ENCODE measurements at regions of chr10 and their contacts with region 1.

Region 1: DNA sequence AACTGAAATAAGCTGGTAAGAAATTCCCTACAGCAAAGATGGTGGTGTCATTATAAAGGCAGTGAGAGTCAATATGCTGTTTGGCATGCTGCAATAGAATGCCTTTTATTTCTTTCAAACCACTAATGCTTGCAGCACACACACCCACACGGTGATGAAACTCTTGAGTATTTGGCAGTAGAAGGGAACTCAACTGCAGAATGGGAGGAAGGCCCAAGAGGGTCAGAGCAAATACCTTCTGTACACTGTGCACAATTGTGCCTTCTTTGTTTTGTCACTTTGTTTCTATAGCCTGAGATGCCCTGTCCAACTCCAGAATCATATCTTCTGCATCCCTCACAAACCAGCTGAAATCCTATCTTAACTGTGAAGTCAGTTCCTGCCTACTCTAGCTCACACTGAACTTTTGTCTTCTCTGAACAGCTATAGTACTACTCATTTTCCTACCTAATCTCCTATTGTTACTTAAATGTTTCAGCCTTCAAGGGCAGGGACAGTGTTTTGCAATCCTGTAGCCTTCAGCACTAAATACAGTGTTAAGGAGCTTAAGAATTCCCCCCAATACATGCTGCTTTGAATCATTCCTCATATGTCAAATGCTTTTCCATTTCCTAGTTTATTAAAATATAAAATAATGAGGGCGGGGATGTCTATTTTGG is 22.2 kb downstream of the MMS19 start:
- DNase-seq: no peak
- ATAC-seq: no peak
- H3K4me3 ChIP-seq: no peak overlapping the region
- H3K27ac ChIP-seq: no peak overlapping the region
- H3K4me1 ChIP-seq: no peaks in the 10 kb centered on the region
- H3K27me3 ChIP-seq: no peaks in the 10 kb centered on the region
- CTCF ChIP-seq: no peak
- EP300 ChIP-seq: no peak
- POLR2A ChIP-seq: no peak
- RAD21 ChIP-seq: no peak

Region 2: DNA sequence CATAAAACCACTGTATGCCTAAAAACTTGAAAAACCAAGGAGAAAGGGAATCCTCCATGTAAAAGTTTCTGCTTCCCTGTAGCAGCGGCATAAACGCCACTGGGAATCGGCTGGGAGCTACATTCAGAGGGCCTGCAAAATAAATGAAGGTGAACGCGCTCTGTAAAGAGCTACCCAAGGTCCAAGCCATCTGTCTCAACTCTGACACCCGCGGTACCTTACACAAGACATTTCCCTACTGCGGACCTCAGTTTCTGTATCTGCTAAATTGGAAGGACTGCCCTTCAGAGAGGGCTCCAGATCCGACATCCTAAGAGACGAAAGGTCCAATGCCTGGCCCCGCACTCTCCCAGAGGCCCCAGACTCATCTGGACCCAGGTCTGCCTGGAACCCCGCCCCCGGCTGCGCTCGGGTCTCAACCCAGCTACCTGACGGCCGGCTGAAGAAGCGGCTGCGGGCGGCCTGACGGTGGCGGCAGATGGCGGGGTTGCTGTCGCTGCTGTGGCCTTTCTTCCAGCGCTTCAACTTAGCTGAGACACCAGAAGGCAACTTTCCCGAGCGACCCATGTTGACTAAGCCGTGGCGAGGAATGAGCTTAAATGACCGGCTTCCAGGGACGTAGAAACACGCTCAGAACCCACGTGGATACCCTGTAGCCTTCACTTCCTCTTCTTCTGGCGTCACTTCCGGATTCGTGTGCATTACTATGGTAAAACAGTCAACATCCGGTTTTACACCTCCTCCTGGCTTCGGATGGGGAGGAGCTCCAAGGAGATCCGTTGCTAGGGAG is 75.2 kb before region 1 on chr10 and contains the start of gene RRP12:
- CTCF ChIA-PET with region 1: no interaction called
- POLR2A ChIA-PET with region 1: no interaction called
- RAD21 ChIA-PET with region 1: no interaction called
- SMC1A ChIA-PET with region 1: no interaction called
- in situ Hi-C with region 1: no loop called
- intact Hi-C with region 1: no loop called
- DNase-seq: peak; percentile 93
- ATAC-seq: peak; percentile 96
- H3K4me3 ChIP-seq: peak within 1 kb of the TSS; percentile 72
- H3K27ac ChIP-seq: peak within 1 kb of the TSS; percentile 34; the same call in 1 of the 2 replicates
- H3K4me1 ChIP-seq: no peaks in the 10 kb centered on the region
- H3K27me3 ChIP-seq: no peaks in the 10 kb centered on the region
- CTCF ChIP-seq: 0 out of 6 replicates have a peak, but pooled peaks of 1 of the 3 experiments have one; percentile 16
- EP300 ChIP-seq: no peak
- POLR2A ChIP-seq: peak; percentile 77
- RAD21 ChIP-seq: no peak
- polyA plus RNA-seq, gene RRP12: 5.3 to 5.7 TPM

Region 3: DNA sequence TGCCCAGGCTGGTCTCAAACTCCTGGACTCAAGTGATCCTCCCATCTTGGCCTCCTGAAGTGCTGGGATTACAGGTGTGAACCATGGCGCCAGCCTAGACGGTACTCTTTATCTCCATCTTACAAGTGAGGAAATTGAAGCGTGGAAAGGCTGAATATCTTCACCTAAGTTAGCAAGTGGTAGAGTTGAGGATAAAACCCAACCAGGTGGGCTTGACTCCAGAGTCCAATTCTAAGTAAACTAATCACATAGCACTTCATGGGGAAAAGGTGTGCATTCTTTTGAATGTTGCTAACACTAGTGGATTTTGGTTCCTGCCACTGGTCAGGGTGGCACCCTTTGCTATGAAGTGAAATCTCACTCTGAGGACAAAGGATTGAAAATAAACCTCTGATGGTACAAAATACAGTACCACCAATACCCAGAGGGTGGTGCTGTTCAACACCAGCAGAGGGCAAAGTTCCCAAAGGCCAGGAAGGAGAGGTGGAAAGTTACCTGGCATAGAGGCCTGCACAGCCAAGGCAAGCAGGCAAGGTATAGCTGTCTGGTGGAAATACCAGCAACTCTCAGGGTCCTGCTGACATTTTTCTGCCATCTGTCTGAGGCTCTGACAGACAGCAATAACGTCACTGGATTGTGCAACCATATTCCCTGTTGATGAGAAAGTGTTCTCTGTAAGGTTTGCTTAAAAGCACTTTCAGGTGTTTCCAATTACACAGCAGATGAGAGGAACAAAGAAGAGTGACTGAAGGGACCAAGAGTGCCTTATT is 12.5 kb before region 1 on chr10:
- CTCF ChIA-PET with region 1: interaction called, 12 read pairs
- POLR2A ChIA-PET with region 1: interaction called, 3 read pairs
- RAD21 ChIA-PET with region 1: no interaction called
- SMC1A ChIA-PET with region 1: interaction called, 3 read pairs
- in situ Hi-C with region 1: no loop called
- intact Hi-C with region 1: no loop called
- DNase-seq: peak; percentile 9
- ATAC-seq: peak; percentile 87
- H3K4me3 ChIP-seq: no peak overlapping the region
- H3K27ac ChIP-seq: no peak overlapping the region
- H3K4me1 ChIP-seq: no peaks in the 10 kb centered on the region
- H3K27me3 ChIP-seq: no peaks in the 10 kb centered on the region
- CTCF ChIP-seq: peak; percentile 77 to 85 (median 84)
- EP300 ChIP-seq: no peak
- POLR2A ChIP-seq: no peak
- RAD21 ChIP-seq: peak; percentile 71

Region 4: GRCh38 chr10:97726636-97727178 is 250.6 kb after region 1 on chr10:
- CTCF ChIA-PET with region 1: no interaction called
- POLR2A ChIA-PET with region 1: no interaction called
- RAD21 ChIA-PET with region 1: no interaction called
- SMC1A ChIA-PET with region 1: no interaction called
- in situ Hi-C with region 1: no loop called
- intact Hi-C with region 1: no loop called
- DNase-seq: no peak
- ATAC-seq: no peak
- H3K4me3 ChIP-seq: no peak overlapping the region
- H3K27ac ChIP-seq: no peak overlapping the region
- H3K4me1 ChIP-seq: no peaks in the 10 kb centered on the region
- H3K27me3 ChIP-seq: no peaks in the 10 kb centered on the region
- CTCF ChIP-seq: no peak
- EP300 ChIP-seq: no peak
- POLR2A ChIP-seq: no peak
- RAD21 ChIP-seq: no peak

Measured in GM12878 (cell line).